ENCODE measurements at regions of chr2 and their contacts with region 1.

Region 1: DNA sequence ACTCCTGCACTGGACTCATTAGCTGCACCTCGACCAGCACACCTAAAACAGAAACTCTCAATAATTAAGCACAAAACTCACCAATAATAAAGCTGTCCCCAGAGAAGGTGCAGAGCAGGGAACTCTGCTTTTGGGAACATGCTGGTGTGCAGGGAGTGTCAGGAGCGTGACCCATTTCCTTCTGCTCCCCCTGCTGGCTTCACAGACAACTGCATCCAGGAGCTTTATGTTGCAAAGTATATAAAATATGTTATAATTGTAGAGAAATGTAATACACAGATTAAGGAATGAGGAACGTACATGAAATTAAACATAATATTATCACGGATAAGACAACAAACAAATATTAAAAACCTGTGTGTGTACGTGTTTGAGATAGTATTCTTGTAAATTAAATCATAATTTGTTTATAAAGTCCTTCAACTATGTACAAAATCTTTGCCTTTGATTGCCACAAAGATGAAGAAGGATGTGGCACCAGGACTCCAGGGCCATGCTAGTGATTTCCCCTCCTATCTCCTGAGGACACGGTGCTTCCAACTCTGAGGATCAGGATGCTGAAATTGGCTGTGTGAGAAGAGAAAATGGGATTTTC is 68.6 kb upstream of the MAL start:
- DNase-seq: peak; percentile 13
- ATAC-seq: peak; percentile 85
- H3K4me3 ChIP-seq: no peak overlapping the region
- H3K27ac ChIP-seq: no peak overlapping the region
- H3K4me1 ChIP-seq: no peaks in the 10 kb centered on the region
- H3K27me3 ChIP-seq: peaks cover 0 to 24% of the 10 kb centered on the region in 2 experiments
- CTCF ChIP-seq: peak; percentile 66
- EP300 ChIP-seq: no peak
- POLR2A ChIP-seq: no peak
- RAD21 ChIP-seq: no peak

Region 2: GRCh38 chr2:94874277-94875008 is 82.5 kb before region 1 on chr2:
- CTCF ChIA-PET with region 1: interaction called, 15 read pairs
- POLR2A ChIA-PET with region 1: no interaction called
- in situ Hi-C with region 1: no loop called
- intact Hi-C with region 1: loop called (anchors 2 kb)
- DNase-seq: peak; percentile 50
- ATAC-seq: peak; percentile 95
- H3K4me3 ChIP-seq: no peak overlapping the region
- H3K27ac ChIP-seq: no peak overlapping the region
- H3K4me1 ChIP-seq: no peaks in the 10 kb centered on the region
- H3K27me3 ChIP-seq: peaks cover 6 to 39% of the 10 kb centered on the region in 2 experiments; a peak in 4 of 5 replicates
- CTCF ChIP-seq: peak; percentile 95
- EP300 ChIP-seq: no peak
- POLR2A ChIP-seq: no peak
- RAD21 ChIP-seq: peak; percentile 68

Region 3: DNA sequence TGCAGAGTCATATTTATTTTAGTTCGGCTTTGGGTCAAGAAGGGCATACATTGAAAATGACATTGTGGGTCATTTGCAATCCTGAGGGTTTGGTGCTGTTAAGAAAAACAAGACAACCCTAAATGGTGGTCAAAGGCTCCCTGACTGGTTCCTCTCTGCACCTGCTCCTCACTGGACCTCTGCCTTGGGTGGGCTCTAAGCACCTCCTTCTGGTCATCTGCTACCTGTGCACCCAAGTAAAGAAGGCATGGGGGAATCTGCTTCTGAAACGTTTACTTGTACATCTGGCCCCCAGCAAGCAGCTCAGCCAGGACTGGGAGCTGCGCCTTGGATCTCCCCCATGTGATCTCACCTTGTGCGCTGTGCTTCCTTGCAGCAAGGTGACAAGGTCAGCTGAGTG is 13.5 kb after region 1 on chr2:
- CTCF ChIA-PET with region 1: no interaction called
- POLR2A ChIA-PET with region 1: no interaction called
- in situ Hi-C with region 1: no loop called
- intact Hi-C with region 1: no loop called
- DNase-seq: no peak
- ATAC-seq: no peak
- H3K4me3 ChIP-seq: no peak overlapping the region
- H3K27ac ChIP-seq: no peak overlapping the region
- H3K4me1 ChIP-seq: no peaks in the 10 kb centered on the region
- H3K27me3 ChIP-seq: peaks cover 0 to 25% of the 10 kb centered on the region in 2 experiments; a peak in 4 of 5 replicates
- CTCF ChIP-seq: no peak
- EP300 ChIP-seq: no peak
- POLR2A ChIP-seq: no peak
- RAD21 ChIP-seq: no peak

Region 4: GRCh38 chr2:95022309-95023221 is 65.7 kb after region 1 on chr2:
- CTCF ChIA-PET with region 1: no interaction called
- POLR2A ChIA-PET with region 1: no interaction called
- in situ Hi-C with region 1: no loop called
- intact Hi-C with region 1: no loop called
- DNase-seq: peak; percentile 53
- ATAC-seq: peak; percentile 91
- H3K4me3 ChIP-seq: no peak overlapping the region
- H3K27ac ChIP-seq: no peak overlapping the region
- H3K4me1 ChIP-seq: peaks cover 5% of the 10 kb centered on the region; the same call in 1 of the 2 replicates
- H3K27me3 ChIP-seq: peaks cover 26 to 88% of the 10 kb centered on the region in 2 experiments; a peak in 4 of 5 replicates
- CTCF ChIP-seq: peak; percentile 97
- EP300 ChIP-seq: no peak
- POLR2A ChIP-seq: no peak
- RAD21 ChIP-seq: peak; percentile 83

Measured in HepG2 (cell line).